ENCODE measurements at regions of chr1 and their contacts with region 1.

Region 1: DNA sequence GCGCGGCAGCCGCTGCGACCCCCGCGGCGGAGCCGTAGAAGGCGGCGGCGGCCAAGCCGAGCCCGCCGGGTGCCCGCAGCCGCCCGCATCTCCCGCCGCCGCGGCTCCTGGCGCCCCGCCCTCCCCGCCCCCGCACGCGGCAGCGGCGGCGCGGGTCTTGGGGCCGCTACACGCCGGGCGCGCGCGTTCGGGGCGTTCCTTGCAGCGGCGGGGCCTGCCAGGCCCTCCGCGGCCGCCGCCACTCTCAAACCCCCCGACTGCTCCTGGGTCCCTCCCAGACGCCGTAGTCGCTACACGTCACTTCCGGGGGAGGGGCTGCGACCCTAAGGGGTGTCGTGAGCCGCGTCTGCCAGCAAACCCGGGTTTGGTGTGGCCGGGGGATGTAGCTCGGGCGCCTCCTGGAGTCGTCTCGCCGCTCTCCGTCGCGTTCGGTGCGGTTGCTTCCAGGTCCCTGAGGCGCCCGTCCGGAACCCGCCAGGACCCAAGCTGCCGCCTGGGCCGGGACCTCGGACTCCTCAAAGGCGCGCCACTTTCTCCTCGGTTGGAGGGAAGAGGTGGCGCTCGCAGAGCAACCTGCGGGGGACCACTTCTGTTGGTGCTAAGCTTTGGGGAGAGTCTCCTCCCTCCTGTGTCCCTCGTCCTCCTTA is at the start of gene ELK4:
- DNase-seq: peak; percentile 100
- H3K4me3 Mint-ChIP-seq: peak within 1 kb of the TSS; percentile 87
- H3K27ac Mint-ChIP-seq: peak within 1 kb of the TSS; percentile 97
- H3K4me1 Mint-ChIP-seq: peaks cover 52% of the 10 kb centered on the region
- H3K27me3 Mint-ChIP-seq: peaks cover 4% of the 10 kb centered on the region

Region 2: DNA sequence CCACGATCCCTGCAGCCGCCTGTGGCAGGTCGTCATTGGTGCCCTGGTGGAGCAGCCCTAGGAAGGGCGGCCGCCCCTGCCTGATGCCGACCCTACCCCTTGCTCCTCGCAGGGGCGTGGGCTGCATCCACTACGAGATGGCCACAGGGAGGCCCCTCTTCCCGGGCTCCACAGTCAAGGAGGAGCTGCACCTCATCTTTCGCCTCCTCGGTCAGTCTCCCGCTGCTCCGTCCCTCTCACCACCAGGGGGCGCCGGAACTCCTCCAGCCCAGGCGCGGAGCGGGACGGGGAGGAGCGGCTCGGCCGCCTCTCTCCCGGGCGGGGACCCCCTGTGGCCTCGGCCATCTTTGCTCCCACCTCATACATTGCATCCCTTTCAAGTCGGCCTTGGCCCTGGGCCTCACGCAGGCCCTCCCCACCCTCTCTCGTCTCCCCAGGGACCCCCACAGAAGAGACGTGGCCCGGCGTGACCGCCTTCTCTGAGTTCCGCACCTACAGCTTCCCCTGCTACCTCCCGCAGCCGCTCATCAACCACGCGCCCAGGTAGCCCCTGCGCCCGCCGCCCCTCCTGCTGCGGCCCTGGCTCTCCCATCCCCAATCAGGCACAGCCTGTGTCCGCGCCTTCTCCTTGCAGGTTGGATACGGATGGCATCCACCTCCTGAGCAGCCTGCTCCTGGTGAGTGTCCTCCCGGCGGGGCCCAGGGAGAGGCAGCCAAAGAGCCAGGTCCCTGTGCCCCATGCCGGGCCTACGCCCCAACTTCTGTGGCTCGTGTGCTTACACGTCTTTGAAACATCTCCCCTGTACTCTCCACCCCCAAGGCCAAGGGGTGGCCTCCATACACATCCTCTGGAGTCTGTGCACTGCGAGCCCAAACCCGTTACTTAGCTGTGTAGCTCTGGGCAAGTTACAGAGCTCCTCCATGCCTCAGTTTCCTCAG is 102.7 kb before region 1 on chr1:
- CTCF ChIA-PET with region 1: interaction called, 20 read pairs
- DNase-seq: peak; percentile 86
- H3K4me3 Mint-ChIP-seq: no peak overlapping the region
- H3K27ac Mint-ChIP-seq: no peak overlapping the region
- H3K4me1 Mint-ChIP-seq: peaks cover 3% of the 10 kb centered on the region
- H3K27me3 Mint-ChIP-seq: peaks cover 21% of the 10 kb centered on the region

Region 3: GRCh38 chr1:205645519-205645918 is 13.7 kb after region 1 on chr1:
- CTCF ChIA-PET with region 1: interaction called, 14 read pairs
- DNase-seq: no peak
- H3K4me3 Mint-ChIP-seq: no peak overlapping the region
- H3K27ac Mint-ChIP-seq: no peak overlapping the region
- H3K4me1 Mint-ChIP-seq: no peaks in the 10 kb centered on the region
- H3K27me3 Mint-ChIP-seq: peaks cover 18% of the 10 kb centered on the region

Measured in activated naive CD4-positive, alpha-beta T cell treated with anti-CD3 and anti-CD28 coated beads, Interleukin-2, amount 10 ng/mL, durations not matched to agents 7 days and 5 days (primary cell).